ENCODE measurements at regions of chr6 and their contacts with region 1.

Region 1: DNA sequence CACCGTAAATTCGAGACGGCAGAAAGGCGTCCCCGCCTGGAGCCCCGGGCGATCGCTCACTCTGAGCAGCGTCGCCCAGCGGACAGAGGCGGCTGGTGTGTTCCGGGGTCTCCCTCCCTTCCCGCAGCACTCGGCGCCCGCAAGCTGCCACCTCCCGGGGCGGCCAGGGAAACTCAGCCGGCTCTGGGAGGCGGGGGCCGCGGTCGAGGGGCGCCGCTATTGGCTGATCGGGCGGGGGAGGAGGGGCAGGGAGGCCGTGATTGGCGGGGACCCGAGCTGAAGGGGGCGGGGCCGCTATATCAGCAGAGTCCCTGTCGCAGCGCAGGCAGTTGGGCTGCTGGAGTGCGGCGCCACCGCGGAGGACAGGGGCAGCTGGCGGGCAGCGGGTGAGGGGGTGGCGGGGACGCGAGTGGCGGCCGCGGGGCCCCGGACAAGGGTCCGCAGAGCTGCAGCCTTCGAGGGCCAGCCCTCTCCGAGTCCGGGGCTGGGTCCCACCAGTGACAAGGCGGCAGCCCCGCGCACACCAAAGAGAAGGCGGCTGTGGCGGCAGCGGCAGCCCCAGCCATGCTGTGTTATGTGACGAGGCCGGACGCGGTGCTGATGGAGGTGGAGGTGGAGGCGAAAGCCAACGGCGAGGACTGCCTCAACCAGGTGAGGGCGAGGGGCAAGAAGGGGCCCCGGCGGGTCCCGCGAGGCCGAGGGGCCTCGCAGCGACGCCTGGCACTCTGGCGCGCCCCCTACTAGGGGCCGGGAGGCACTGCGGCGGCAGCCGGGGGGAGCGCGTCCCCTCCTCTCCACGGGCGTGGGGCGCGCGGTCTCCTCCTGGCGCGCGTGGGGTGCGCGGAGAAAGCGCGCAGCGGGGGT is at the start of gene MYLIP:
- DNase-seq: peak; percentile 98
- H3K4me3 Mint-ChIP-seq: peak within 1 kb of the TSS; percentile 86
- H3K27ac Mint-ChIP-seq: peak within 1 kb of the TSS; percentile 92
- H3K4me1 Mint-ChIP-seq: peaks cover 30% of the 10 kb centered on the region
- H3K27me3 Mint-ChIP-seq: peaks cover 7% of the 10 kb centered on the region
- total RNA-seq, gene MYLIP: 7.3 to 8.1 TPM

Region 2: GRCh38 chr6:15691250-15691869 is 437.6 kb before region 1 on chr6:
- CTCF ChIA-PET with region 1: interaction called, 9 read pairs
- intact Hi-C with region 1: loop called (anchors 1 kb)
- DNase-seq: peak; percentile 87
- H3K4me3 Mint-ChIP-seq: no peak overlapping the region
- H3K27ac Mint-ChIP-seq: no peak overlapping the region
- H3K4me1 Mint-ChIP-seq: peaks cover 7% of the 10 kb centered on the region
- H3K27me3 Mint-ChIP-seq: peaks cover 5% of the 10 kb centered on the region

Region 3: GRCh38 chr6:15911753-15912504 is 217.1 kb before region 1 on chr6:
- CTCF ChIA-PET with region 1: no interaction called
- intact Hi-C with region 1: loop called (anchors 1 kb)
- DNase-seq: peak; percentile 69
- H3K4me3 Mint-ChIP-seq: no peak overlapping the region
- H3K27ac Mint-ChIP-seq: no peak overlapping the region
- H3K4me1 Mint-ChIP-seq: peaks cover 31% of the 10 kb centered on the region
- H3K27me3 Mint-ChIP-seq: peaks cover 2% of the 10 kb centered on the region

Region 4: DNA sequence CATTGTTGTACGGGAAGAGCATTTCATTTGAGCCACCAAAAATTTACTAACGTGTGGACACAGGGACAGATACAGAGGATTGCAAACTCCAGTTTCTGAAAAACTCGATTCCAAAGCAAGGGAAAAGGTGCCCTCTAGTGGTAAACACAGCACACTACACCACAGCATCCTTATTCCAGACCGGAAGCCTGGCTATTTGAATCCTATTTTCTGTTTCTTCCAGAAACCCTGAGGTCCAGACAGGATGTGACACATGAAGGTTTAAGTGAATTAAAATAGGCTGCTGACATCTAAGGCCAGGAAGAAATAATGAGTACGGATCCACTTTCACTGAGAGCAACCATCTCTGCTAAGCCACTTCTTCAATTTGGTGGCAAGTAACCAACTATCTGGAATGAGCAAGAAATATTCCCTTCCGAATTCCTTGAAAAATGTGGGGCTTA is 77.6 kb after region 1 on chr6:
- CTCF ChIA-PET with region 1: interaction called, 7 read pairs
- intact Hi-C with region 1: loop called (anchors 1 kb)
- DNase-seq: peak; percentile 61
- H3K4me3 Mint-ChIP-seq: no peak overlapping the region
- H3K27ac Mint-ChIP-seq: no peak overlapping the region
- H3K4me1 Mint-ChIP-seq: no peaks in the 10 kb centered on the region
- H3K27me3 Mint-ChIP-seq: peaks cover 3% of the 10 kb centered on the region

Region 5: DNA sequence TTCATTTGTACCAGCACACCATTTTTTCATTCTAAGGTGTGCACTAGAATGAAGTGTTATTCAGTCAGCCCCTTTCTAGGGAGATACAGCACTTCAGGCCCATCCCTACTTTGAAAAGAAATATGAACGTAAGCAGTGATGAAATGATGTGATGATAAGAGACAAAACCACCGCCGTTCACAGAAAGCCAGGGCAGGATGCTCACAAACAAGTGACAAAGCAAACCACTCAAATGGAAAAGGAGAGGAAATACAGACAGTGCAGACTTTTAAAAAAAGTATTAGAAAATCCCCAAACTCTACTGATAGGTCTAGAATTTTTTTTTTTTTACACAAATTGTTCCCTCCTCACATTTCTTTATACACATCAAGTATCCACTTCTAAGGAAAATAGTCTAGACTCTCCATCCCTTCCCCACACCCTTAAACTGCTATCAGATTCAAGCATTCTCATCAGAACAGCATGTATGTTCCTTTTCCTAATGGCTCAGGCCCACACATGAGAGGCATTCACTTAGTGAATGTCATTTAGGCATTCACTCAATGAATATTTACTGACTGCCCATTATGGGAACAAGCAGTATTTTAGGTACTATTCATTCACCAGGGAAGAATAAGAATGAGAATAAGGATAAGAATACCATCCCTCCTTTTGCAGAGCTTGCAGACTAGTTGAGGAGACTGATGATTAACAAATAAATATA is 352.9 kb after region 1 on chr6:
- CTCF ChIA-PET with region 1: no interaction called
- intact Hi-C with region 1: loop called (anchors 5 kb)
- DNase-seq: peak; percentile 79
- H3K4me3 Mint-ChIP-seq: peak overlapping the region; percentile 32
- H3K27ac Mint-ChIP-seq: peak overlapping the region; percentile 75
- H3K4me1 Mint-ChIP-seq: peaks cover 70% of the 10 kb centered on the region
- H3K27me3 Mint-ChIP-seq: no peaks in the 10 kb centered on the region

Region 6: GRCh38 chr6:17700421-17701416 is 1571.7 kb after region 1 on chr6:
- CTCF ChIA-PET with region 1: no interaction called
- intact Hi-C with region 1: loop called (anchors 5 kb)
- DNase-seq: no peak
- H3K4me3 Mint-ChIP-seq: no peak overlapping the region
- H3K27ac Mint-ChIP-seq: peak overlapping the region; percentile 18
- H3K4me1 Mint-ChIP-seq: peaks cover 56% of the 10 kb centered on the region
- H3K27me3 Mint-ChIP-seq: no peaks in the 10 kb centered on the region

Measured in activated naive CD4-positive, alpha-beta T cell treated with anti-CD3 and anti-CD28 coated beads for 36 hours (primary cell).